PC-3 (cell line): ENCODE measurements at regions of chr5 and their contacts with region 1.

Region 1: DNA sequence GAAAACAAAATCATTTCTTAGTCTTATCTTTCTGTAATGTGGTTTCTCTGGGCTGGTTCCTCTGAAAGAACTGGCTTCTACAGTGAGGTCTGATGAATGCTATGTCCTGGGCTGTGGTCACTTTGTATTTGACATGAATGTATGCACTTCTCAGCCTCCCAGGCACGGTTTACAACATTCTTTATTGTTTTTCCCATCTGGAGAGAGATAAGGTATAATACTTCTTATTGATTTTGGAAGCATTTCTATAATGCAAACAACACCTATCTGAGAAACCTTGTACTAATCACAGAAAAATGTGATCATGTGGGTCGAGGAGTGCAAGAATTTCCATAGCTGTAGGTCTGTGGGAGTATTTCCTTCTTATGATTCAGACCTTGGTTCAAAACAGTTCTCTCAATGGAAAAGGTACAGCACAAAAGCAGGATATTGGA is 46.9 kb downstream of the ACTBL2 start:
- DNase-seq: peak; percentile 93
- ATAC-seq: peak; percentile 92
- H3K4me3 ChIP-seq: no peak overlapping the region
- H3K27ac ChIP-seq: peak overlapping the region; percentile 99
- H3K4me1 ChIP-seq: peaks cover 47% of the 10 kb centered on the region
- H3K27me3 ChIP-seq: no peaks in the 10 kb centered on the region
- CTCF ChIP-seq: no peak

Region 2: GRCh38 chr5:57267805-57268204 is 167.9 kb before region 1 on chr5:
- CTCF ChIA-PET with region 1: no interaction called
- POLR2A ChIA-PET with region 1: no interaction called
- intact Hi-C with region 1: no loop called
- DNase-seq: no peak
- ATAC-seq: no peak
- H3K4me3 ChIP-seq: no peak overlapping the region
- H3K27ac ChIP-seq: no peak overlapping the region
- H3K4me1 ChIP-seq: no peaks in the 10 kb centered on the region
- H3K27me3 ChIP-seq: no peaks in the 10 kb centered on the region
- CTCF ChIP-seq: no peak

Region 3: DNA sequence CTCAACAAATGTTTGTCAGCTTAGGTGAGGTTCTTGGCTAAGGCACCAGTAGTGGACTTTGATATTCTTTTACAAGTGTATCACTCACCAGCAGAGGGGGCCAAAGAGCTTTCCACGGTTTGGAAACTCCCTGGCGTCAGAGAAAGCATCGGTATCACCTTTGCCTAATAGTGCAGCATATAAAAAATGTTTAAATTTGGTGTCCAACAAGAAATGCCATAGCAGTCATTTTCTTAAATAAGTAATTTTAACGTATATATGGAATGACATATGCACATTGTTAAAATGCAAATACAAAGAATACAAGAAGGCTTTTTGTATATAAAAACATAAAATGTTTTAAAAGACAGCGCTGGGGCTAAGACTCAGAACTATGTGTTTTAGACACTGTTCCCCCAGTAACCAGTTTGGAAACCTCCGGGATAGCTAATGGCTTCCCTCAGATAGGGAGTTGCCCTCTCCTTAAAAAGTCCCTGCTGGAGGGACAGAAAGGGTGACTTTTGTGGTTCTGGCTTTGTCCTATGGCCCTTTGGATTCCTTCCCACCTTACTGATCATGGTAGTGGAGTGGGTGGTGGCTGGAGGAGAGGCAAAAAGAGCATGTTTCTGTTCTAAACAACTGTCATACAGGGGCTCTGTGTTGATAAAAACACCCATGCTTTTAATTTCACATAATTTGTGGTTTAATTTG is 137.3 kb before region 1 on chr5:
- CTCF ChIA-PET with region 1: interaction called, 4 read pairs
- POLR2A ChIA-PET with region 1: no interaction called
- intact Hi-C with region 1: loop called (anchors 1 kb)
- DNase-seq: peak; percentile 86
- ATAC-seq: peak; percentile 79
- H3K4me3 ChIP-seq: 0 out of 2 replicates have a peak overlapping the region, but pooled peaks have one; percentile 29
- H3K27ac ChIP-seq: peak overlapping the region; percentile 28; the same call in 1 of the 2 replicates
- H3K4me1 ChIP-seq: peaks cover 20% of the 10 kb centered on the region
- H3K27me3 ChIP-seq: no peaks in the 10 kb centered on the region
- CTCF ChIP-seq: peak; percentile 73

Region 4: DNA sequence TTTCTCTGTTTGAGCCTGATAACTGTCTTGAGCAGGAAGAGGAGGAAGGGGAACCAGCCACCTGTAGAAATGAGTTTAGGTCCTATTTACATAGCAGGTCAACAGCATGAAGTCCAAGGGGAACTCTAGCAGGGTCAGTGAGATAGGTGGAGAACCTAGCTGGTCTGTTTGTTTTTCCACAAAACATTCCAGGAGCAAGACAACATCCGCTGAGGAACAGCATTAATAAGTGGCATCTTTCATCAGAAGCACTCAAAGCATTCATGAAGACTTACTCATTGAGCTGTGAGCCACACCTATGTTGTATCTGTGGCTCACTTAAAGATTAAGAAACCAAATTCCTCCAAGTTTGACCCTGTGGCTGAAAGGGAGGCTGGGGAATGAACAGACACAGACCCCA is 69.0 kb before region 1 on chr5:
- CTCF ChIA-PET with region 1: no interaction called
- POLR2A ChIA-PET with region 1: no interaction called
- intact Hi-C with region 1: loop called (anchors 2 kb)
- DNase-seq: peak; percentile 86
- ATAC-seq: peak; percentile 95
- H3K4me3 ChIP-seq: no peak overlapping the region
- H3K27ac ChIP-seq: peak overlapping the region; percentile 80
- H3K4me1 ChIP-seq: peaks cover 34% of the 10 kb centered on the region
- H3K27me3 ChIP-seq: no peaks in the 10 kb centered on the region
- CTCF ChIP-seq: no peak

Region 5: GRCh38 chr5:57411982-57412381 is 23.7 kb before region 1 on chr5:
- CTCF ChIA-PET with region 1: no interaction called
- POLR2A ChIA-PET with region 1: interaction called, 12 read pairs
- intact Hi-C with region 1: loop called (anchors 1 kb)
- DNase-seq: peak; percentile 58
- ATAC-seq: peak; percentile 81
- H3K4me3 ChIP-seq: no peak overlapping the region
- H3K27ac ChIP-seq: peak overlapping the region; percentile 14
- H3K4me1 ChIP-seq: peaks cover 22% of the 10 kb centered on the region
- H3K27me3 ChIP-seq: no peaks in the 10 kb centered on the region
- CTCF ChIP-seq: no peak

Region 6: DNA sequence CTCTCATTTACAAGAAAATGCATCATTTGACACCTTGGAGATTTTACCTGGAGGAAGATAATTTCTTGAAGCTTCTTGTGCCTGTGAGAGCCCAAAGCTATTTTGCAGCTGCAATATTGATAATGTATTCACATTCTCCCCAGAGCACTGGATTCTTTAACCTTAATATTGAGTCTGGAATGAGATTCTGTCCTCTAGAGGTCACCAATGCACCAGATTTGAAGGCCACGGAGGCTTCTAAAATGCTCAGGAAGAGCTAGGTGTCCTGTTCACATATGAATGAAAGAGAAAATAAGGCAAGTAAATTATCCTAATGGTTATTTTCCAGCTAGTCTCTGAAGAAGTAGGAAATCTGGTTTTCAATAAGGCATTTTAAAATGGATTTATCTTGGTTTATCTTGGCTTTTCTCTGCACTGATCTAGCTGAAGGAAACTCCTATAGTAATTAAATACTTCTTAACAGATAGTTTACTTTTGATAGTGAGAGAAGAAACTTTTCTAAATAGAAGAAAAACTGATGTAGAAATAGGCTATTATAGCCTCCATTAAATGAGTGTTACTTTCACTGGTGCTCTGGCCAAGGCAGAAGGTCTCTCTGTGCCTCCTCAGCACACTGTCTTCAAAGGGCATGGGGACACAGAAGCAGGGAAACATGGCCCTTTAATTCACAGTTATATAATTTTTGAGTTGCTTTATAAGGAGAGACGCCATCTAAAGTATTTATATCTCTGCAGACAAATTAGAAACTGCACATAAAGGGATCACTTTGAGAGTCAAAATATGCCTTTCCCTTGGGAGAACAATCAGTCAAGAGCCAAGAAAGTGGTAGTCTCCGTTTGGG is 343.9 kb after region 1 on chr5:
- CTCF ChIA-PET with region 1: no interaction called
- POLR2A ChIA-PET with region 1: no interaction called
- intact Hi-C with region 1: loop called (anchors 5 kb)
- DNase-seq: peak; percentile 83
- ATAC-seq: peak; percentile 44
- H3K4me3 ChIP-seq: no peak overlapping the region
- H3K27ac ChIP-seq: peak overlapping the region; percentile 40
- H3K4me1 ChIP-seq: peaks cover 47% of the 10 kb centered on the region
- H3K27me3 ChIP-seq: no peaks in the 10 kb centered on the region
- CTCF ChIP-seq: peak; percentile 71